Cardiac septum (tissue), 1 donor: ENCODE measurements at regions of chr9 and their contacts with region 1.

Region 1: GRCh38 chr9:91422758-91423711 is 597 bp downstream of the NFIL3 start:
- DNase-seq: no peak

Region 2: GRCh38 chr9:90914868-90915483 is 508.1 kb before region 1 on chr9:
- intact Hi-C with region 1: loop called (anchors 5 kb)
- DNase-seq: peak; percentile 89

Region 3: GRCh38 chr9:91101611-91102168 is 321.3 kb before region 1 on chr9:
- intact Hi-C with region 1: loop called (anchors 1 kb)
- DNase-seq: no peak

Region 4: DNA sequence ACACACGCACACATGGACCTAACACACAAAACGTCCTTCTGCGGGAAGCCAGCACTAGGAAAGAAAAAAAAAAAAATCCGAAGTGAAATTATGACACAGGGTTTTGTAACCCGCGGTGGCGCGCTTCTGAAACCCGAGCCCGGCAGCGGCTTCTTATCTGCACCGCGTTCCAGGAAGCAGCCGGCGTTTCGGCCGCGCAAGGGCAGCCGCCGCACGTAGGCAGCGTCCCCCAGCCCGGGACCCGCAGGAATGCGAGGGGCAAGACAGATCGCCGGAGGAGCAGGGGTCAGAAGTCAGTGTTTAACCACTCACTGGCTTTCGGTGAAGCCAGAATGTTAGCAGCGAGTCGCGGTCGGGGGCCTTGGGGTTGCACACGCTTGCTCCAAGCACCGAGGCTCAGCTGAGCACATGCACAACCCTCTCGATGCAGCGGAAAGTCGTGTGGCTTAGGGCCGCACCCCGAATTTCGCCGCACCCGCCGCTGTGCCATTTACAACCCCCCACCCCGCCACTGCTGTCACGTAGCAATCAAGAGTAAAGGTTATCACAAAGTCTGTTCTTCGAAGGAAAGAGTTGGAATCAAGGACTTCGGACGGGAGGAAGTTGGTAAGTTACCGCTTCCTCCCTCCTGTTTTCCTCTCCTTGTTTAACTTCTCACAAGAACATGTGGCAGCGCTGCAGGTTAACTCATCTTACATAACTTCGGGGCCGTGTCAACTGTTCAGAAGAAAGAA is 229.2 kb before region 1 on chr9:
- intact Hi-C with region 1: loop called (anchors 1 kb)
- DNase-seq: peak; percentile 93

Region 5: GRCh38 chr9:91253488-91253887 is 169.5 kb before region 1 on chr9:
- intact Hi-C with region 1: no loop called
- DNase-seq: no peak

Region 6: GRCh38 chr9:91361291-91362050 is 61.6 kb before region 1 on chr9 and contains the start of gene AUH:
- intact Hi-C with region 1: loop called (anchors 2 kb)
- DNase-seq: peak; percentile 95
- total RNA-seq, gene AUH: 39.7 TPM

Region 7: GRCh38 chr9:91589101-91589553 is 166.1 kb after region 1 on chr9:
- intact Hi-C with region 1: no loop called
- DNase-seq: no peak

Region 8: GRCh38 chr9:91681461-91682305 is 258.6 kb after region 1 on chr9:
- intact Hi-C with region 1: loop called (anchors 5 kb)
- DNase-seq: peak; percentile 87

Region 9: DNA sequence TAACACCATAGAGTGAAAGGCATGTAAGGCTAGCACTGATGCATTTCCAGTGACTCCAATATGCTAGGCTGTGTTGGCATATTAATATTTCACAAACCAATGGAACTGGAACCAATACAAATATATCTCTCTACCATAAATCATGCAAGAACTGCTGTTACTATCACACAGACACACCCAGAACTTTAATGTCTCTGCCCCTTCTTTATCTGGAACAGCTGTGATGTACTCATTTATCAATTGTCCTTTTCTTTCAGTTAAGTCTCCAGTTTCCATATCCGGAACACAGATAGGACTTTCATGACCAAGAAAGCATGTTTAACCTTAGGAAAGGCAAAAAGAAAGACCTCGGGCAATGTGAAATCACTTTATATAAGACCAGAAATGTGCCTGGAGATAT is 621.9 kb after region 1 on chr9:
- intact Hi-C with region 1: no loop called
- DNase-seq: no peak